Activated CD4-positive, alpha-beta T cell treated with anti-CD3 and anti-CD28 coated beads for 36 hours (primary cell): ENCODE measurements at regions of chr5 and their contacts with region 1.

Region 1: DNA sequence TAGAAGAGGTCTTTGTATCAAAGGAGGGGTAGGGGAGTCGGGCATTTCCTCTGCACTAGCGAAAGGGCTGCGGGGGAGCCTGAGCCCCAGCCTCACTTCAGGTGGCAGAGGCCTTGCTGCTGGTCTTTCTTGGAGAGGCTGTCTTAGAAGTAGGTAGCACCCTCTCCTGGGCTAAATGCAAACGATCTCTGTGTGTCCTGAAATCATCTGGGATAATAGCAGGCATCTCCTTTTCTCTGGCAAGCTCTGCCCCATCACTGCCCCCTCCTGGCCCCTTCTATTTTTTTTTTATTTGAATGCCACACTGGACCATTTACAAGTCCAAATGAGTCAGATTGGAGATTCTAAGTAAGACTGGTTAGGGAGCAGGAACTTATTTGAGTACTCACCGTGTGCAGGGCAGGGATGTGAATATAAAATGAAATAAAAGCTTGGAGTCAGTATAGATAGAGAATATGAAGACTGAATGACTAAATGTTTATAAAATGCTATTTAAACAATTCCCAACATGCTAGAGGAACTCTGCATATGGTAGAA is 137.1 kb downstream of the FGF1 start:
- DNase-seq: peak; percentile 51
- ATAC-seq: peak; percentile 92
- H3K4me3 Mint-ChIP-seq: no peak overlapping the region
- H3K27ac Mint-ChIP-seq: no peak overlapping the region
- H3K4me1 Mint-ChIP-seq: peaks cover 15% of the 10 kb centered on the region
- H3K27me3 Mint-ChIP-seq: peaks cover 9% of the 10 kb centered on the region

Region 2: DNA sequence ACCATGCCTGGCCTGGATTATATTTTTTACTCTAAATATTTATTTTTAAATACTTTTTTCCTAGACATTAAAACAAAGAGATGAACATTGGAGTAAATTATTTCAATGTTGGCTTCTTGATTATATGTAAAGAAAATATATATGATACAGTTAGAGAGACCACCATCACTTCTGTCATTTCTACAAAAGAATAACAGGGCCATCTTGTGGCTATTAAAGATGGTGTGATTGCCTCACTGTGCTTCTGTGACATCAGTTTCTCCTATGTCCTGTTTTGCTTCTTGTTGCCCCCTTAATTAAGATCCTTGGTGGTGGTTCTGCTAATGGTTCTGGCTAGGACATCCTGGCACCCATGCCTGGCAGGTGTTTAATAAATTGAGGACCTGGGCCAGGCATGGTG is 407.3 kb before region 1 on chr5:
- CTCF ChIA-PET with region 1: no interaction called
- POLR2A ChIA-PET with region 1: no interaction called
- intact Hi-C with region 1: no loop called
- DNase-seq: no peak
- ATAC-seq: no peak
- H3K4me3 Mint-ChIP-seq: no peak overlapping the region
- H3K27ac Mint-ChIP-seq: no peak overlapping the region
- H3K4me1 Mint-ChIP-seq: peaks cover 11% of the 10 kb centered on the region
- H3K27me3 Mint-ChIP-seq: no peaks in the 10 kb centered on the region

Region 3: GRCh38 chr5:142151436-142152383 is 397.1 kb before region 1 on chr5:
- CTCF ChIA-PET with region 1: interaction called, 4 read pairs
- POLR2A ChIA-PET with region 1: interaction called, 3 read pairs
- intact Hi-C with region 1: loop called (anchors 1 kb)
- DNase-seq: peak; percentile 68
- ATAC-seq: peak; percentile 77
- H3K4me3 Mint-ChIP-seq: no peak overlapping the region
- H3K27ac Mint-ChIP-seq: no peak overlapping the region
- H3K4me1 Mint-ChIP-seq: peaks cover 16% of the 10 kb centered on the region
- H3K27me3 Mint-ChIP-seq: no peaks in the 10 kb centered on the region

Region 4: GRCh38 chr5:142324871-142325724 is 223.7 kb before region 1 on chr5 and contains the start of gene SPRY4:
- CTCF ChIA-PET with region 1: interaction called, 3 read pairs
- POLR2A ChIA-PET with region 1: no interaction called
- intact Hi-C with region 1: loop called (anchors 1 to 2 kb)
- DNase-seq: peak; percentile 95
- ATAC-seq: peak; percentile 89
- H3K4me3 Mint-ChIP-seq: peak within 1 kb of the TSS; percentile 77
- H3K27ac Mint-ChIP-seq: peak within 1 kb of the TSS; percentile 79
- H3K4me1 Mint-ChIP-seq: peaks cover 37% of the 10 kb centered on the region
- H3K27me3 Mint-ChIP-seq: peaks cover 36% of the 10 kb centered on the region
- total RNA-seq, gene SPRY4: 0.93 to 0.98 TPM

Region 5: GRCh38 chr5:142386137-142387032 is 162.4 kb before region 1 on chr5:
- CTCF ChIA-PET with region 1: interaction called, 3 read pairs
- POLR2A ChIA-PET with region 1: no interaction called
- intact Hi-C with region 1: loop called in 1 of 2 experiments (anchors 5 kb)
- DNase-seq: peak; percentile 13
- ATAC-seq: peak; percentile 71
- H3K4me3 Mint-ChIP-seq: no peak overlapping the region
- H3K27ac Mint-ChIP-seq: no peak overlapping the region
- H3K4me1 Mint-ChIP-seq: peaks cover 14% of the 10 kb centered on the region
- H3K27me3 Mint-ChIP-seq: no peaks in the 10 kb centered on the region

Region 6: GRCh38 chr5:142515036-142515435 is 33.8 kb before region 1 on chr5:
- CTCF ChIA-PET with region 1: no interaction called
- POLR2A ChIA-PET with region 1: no interaction called
- intact Hi-C with region 1: no loop called
- DNase-seq: no peak
- ATAC-seq: no peak
- H3K4me3 Mint-ChIP-seq: no peak overlapping the region
- H3K27ac Mint-ChIP-seq: no peak overlapping the region
- H3K4me1 Mint-ChIP-seq: peaks cover 2% of the 10 kb centered on the region
- H3K27me3 Mint-ChIP-seq: no peaks in the 10 kb centered on the region

Region 7: DNA sequence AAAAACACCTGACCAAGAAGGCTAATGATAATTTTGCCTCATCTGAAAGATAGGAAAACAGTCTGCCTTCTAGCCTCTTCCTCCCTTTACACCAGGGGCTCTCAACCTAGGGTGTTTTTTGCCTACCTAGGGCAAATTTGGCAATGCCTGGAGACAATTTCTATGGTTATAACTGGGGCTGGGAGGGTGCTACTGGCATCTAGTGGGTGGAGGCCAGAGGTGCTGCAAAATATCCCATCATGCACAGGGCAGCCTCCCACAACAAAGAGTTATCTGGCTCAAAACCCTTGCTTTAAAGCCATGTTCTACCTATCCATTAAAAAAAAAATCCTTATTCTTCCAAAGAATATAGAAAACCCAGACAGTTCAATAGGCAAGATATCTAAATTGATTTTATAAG is 899.7 kb after region 1 on chr5:
- CTCF ChIA-PET with region 1: no interaction called
- POLR2A ChIA-PET with region 1: no interaction called
- intact Hi-C with region 1: no loop called
- DNase-seq: peak; percentile 55
- ATAC-seq: peak; percentile 48
- H3K4me3 Mint-ChIP-seq: no peak overlapping the region
- H3K27ac Mint-ChIP-seq: no peak overlapping the region
- H3K4me1 Mint-ChIP-seq: peaks cover 26% of the 10 kb centered on the region
- H3K27me3 Mint-ChIP-seq: no peaks in the 10 kb centered on the region